ENCODE measurements at regions of chr2 and their contacts with region 1.

Region 1: GRCh38 chr2:40554668-40555285 is 102.9 kb upstream of the SLC8A1 start:
- DNase-seq: peak; percentile 69
- H3K4me3 ChIP-seq: no peak overlapping the region
- H3K27ac ChIP-seq: no peak overlapping the region
- H3K4me1 ChIP-seq: no peaks in the 10 kb centered on the region
- H3K27me3 ChIP-seq: no peaks in the 10 kb centered on the region
- CTCF ChIP-seq: peak; percentile 70 to 80
- POLR2A ChIP-seq: no peak

Region 2: GRCh38 chr2:40212804-40213470 is 341.8 kb before region 1 on chr2:
- CTCF ChIA-PET with region 1: interaction called, 24 read pairs
- POLR2A ChIA-PET with region 1: no interaction called
- dilution Hi-C with region 1: no loop called
- intact Hi-C with region 1: loop called (anchors 1 kb)
- DNase-seq: peak; percentile 22
- H3K4me3 ChIP-seq: no peak overlapping the region
- H3K27ac ChIP-seq: no peak overlapping the region
- H3K4me1 ChIP-seq: no peaks in the 10 kb centered on the region
- H3K27me3 ChIP-seq: peaks cover 0 to 1% of the 10 kb centered on the region in 2 experiments
- CTCF ChIP-seq: peak in 1 of 2 donors; percentile 32
- POLR2A ChIP-seq: no peak

Region 3: GRCh38 chr2:40543381-40543780 is 11.4 kb before region 1 on chr2:
- CTCF ChIA-PET with region 1: interaction called, 25 read pairs
- POLR2A ChIA-PET with region 1: no interaction called
- dilution Hi-C with region 1: no loop called
- intact Hi-C with region 1: no loop called
- DNase-seq: no peak
- H3K4me3 ChIP-seq: no peak overlapping the region
- H3K27ac ChIP-seq: no peak overlapping the region
- H3K4me1 ChIP-seq: no peaks in the 10 kb centered on the region
- H3K27me3 ChIP-seq: no peaks in the 10 kb centered on the region
- CTCF ChIP-seq: no peak
- POLR2A ChIP-seq: no peak